Cardiac septum (tissue), 1 donor: ENCODE measurements at regions of chr14 and their contacts with region 1.

Region 1: DNA sequence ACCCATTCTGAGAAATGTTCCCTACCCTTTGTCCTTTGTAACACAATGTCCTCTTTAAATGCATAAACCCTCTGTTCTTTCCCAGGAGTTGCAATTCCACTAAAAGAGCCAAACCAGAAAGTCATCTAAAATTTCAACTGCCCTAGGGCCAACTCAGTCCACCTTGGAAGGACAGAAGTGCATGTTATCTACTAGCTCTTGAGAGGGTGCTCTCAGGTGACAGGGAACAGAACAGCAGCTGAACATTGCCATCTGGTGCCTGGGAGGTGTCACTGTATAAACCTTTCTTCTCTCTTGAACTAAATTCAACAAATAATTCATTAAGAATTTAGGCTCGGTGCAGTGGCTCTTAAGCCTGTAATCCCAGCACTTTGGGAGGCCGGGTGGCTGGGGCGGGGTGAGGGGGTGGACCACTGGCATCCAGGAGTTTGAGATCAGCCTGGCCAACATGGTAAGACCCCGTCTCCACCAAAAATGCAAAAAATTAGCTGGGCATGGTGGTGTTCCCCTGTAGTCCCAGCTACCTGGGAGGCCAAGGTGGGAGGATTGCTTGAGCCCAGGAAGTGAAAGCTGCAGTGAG is 10.3 kb upstream of the FERMT2 start:
- DNase-seq: no peak

Region 2: DNA sequence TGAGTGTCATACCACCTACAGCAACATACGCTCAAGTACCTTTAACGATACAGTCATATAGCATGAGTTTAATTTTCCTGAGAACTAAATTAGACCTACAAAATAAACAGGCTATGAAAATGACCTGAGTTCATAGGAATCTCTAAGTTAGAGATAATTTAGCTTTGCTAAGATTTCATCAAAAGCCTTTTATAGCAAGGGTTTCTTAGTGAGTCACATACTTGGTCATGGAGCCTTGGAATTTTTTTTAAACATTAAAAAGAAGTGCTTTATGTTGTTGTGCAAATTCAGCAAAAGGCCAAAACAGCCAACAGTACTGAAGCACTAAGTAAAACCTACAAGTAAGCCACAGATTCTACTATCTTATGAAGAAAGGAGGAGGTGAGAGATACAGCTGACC is 83.3 kb after region 1 on chr14:
- intact Hi-C with region 1: loop called (anchors 5 kb)
- DNase-seq: no peak